Activated T-helper 1 cell treated with anti-CD3 and anti-CD28 coated beads, Interleukin-12 subunit alpha, Interleukin-12 subunit beta, Interleukin-2, Interleukin-4 antibody, amounts not matched to agents 30 ng/mL and 10 ng/mL and 1 ng/mL, durations not matched to agents 14 hours and 24 hours and 36 hours (primary cell): ENCODE measurements at regions of chr10 and their contacts with region 1.

Region 1: GRCh38 chr10:49164559-49165188 is 23.5 kb downstream of the TMEM273 start:
- DNase-seq: peak; percentile 31
- H3K4me3 Mint-ChIP-seq: no peak overlapping the region
- H3K27ac Mint-ChIP-seq: peak overlapping the region; percentile 25
- H3K4me1 Mint-ChIP-seq: peaks cover 33% of the 10 kb centered on the region
- H3K27me3 Mint-ChIP-seq: no peaks in the 10 kb centered on the region

Region 2: GRCh38 chr10:49047128-49047639 is 117.5 kb before region 1 on chr10:
- intact Hi-C with region 1: no loop called
- DNase-seq: no peak
- H3K4me3 Mint-ChIP-seq: no peak overlapping the region
- H3K27ac Mint-ChIP-seq: no peak overlapping the region
- H3K4me1 Mint-ChIP-seq: no peaks in the 10 kb centered on the region
- H3K27me3 Mint-ChIP-seq: peaks cover 12% of the 10 kb centered on the region

Region 3: DNA sequence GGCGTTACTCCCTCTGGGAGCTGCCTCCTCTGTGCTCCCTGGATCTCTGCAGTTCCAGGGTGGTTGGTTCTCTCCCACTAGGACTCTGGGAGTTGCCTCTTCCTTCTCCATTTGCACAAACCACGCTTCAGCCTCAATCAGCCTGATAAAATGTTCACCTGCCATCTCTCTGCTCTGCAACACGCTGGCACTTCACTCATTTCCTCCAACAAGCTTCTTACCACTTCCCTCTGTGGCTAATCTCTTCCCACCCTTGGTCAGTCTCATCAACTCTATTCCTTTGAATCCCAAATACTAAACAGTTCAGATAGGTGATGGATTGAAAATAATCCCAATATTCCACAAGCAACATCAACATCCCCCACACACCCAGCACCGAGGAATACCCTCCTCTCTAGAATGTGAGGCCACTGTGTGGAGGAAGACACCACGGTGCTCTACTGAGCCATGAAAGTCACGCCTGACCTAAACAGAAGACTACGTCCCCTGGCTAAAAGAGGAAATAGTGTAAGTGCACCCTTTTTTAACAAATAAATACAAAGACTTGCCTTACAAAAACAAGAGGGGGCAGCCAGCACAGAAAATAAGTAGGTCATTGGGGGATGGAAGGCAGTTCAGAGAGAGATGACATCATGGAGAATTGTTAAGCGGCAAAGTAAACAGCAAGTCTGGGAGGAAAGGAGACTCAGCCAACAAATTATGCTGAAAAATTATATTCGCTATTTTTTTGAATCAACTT is 28.9 kb before region 1 on chr10:
- intact Hi-C with region 1: no loop called
- DNase-seq: no peak
- H3K4me3 Mint-ChIP-seq: no peak overlapping the region
- H3K27ac Mint-ChIP-seq: no peak overlapping the region
- H3K4me1 Mint-ChIP-seq: no peaks in the 10 kb centered on the region
- H3K27me3 Mint-ChIP-seq: peaks cover 5% of the 10 kb centered on the region

Region 4: DNA sequence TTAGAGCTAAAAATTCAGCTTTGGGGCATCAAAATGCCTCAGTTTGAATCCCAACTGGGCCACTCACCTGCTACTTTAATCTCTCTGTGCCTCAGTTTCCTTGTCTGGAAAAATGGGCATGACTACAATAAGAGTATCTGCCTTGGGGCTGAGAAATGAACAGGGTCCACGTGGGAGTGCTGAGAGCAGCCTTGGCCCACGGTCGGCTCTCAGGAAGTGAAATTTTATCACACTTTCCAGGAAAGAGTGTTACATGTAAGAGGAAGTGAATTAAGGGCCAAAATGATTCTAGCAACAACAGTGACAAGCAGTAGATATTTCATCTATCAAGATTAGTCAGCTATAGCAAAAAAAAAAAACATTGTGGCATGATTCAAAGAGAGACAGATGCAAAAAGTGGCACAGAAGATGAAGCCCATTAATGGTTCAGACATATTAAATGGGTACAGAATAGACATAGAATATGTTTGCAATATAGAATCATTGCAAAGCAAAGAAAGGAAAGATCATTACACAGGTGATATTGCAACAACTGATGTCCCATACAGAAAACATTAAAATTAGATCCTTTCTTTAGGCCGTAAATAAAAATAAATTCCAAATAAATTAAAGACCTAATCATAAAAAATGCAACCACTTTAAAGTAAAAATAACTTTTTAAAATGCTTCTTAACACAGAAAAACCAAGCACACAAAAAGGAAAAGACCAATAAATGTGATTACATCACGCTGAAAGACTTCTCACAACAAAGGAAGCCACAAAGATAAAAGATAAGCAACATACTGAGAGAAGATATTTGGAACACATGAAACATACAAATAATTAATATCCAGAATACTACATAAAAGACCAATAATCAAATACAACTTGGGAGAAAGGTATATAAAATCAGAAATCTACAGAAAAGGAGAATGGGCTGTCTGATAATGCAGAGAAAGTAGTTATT is 19.2 kb after region 1 on chr10:
- intact Hi-C with region 1: loop called (anchors 1 kb)
- DNase-seq: no peak
- H3K4me3 Mint-ChIP-seq: peak overlapping the region; percentile 63
- H3K27ac Mint-ChIP-seq: peak overlapping the region; percentile 70
- H3K4me1 Mint-ChIP-seq: peaks cover 71% of the 10 kb centered on the region
- H3K27me3 Mint-ChIP-seq: peaks cover 15% of the 10 kb centered on the region